Prostate gland (tissue), 2 donors: ENCODE measurements at regions of chr3 and their contacts with region 1.

Region 1: GRCh38 chr3:154766765-154767503 is 313.2 kb upstream of the MME start:
- DNase-seq: no peak
- H3K4me3 ChIP-seq: no peak overlapping the region
- H3K27ac ChIP-seq: no peak overlapping the region
- H3K4me1 ChIP-seq: no peaks in the 10 kb centered on the region
- H3K27me3 ChIP-seq: no peaks in the 10 kb centered on the region
- CTCF ChIP-seq: no peak
- POLR2A ChIP-seq: no peak

Region 2: DNA sequence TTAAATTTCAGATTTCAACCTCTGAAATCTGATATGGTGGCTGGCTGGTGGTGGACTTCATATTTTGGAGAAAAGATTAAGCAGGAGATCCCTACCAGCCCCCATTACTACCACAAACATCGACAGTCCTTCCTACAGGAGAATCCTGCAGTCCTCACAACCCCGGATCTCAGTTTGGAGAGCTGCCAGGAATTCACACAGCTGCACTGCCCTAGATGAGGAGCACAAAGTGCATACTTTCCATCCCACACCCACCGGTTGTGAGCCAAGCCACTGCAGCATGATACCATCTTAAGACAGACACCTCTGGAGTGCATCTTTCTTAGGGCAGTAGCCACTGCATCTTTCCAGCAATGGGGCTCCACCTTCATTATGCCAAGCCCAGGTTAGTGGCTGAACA is 151.5 kb before region 1 on chr3:
- intact Hi-C with region 1: no loop called
- DNase-seq: no peak
- H3K4me3 ChIP-seq: no peak overlapping the region
- H3K27ac ChIP-seq: no peak overlapping the region
- H3K4me1 ChIP-seq: no peaks in the 10 kb centered on the region
- H3K27me3 ChIP-seq: no peaks in the 10 kb centered on the region
- CTCF ChIP-seq: no peak
- POLR2A ChIP-seq: no peak

Region 3: GRCh38 chr3:154898443-154898842 is 131.5 kb after region 1 on chr3:
- intact Hi-C with region 1: no loop called
- DNase-seq: no peak
- H3K4me3 ChIP-seq: no peak overlapping the region
- H3K27ac ChIP-seq: no peak overlapping the region
- H3K4me1 ChIP-seq: no peaks in the 10 kb centered on the region
- H3K27me3 ChIP-seq: no peaks in the 10 kb centered on the region
- CTCF ChIP-seq: no peak
- POLR2A ChIP-seq: no peak

Region 4: GRCh38 chr3:154981201-154981600 is 214.3 kb after region 1 on chr3:
- intact Hi-C with region 1: no loop called
- DNase-seq: no peak
- H3K4me3 ChIP-seq: no peak overlapping the region
- H3K27ac ChIP-seq: no peak overlapping the region
- H3K4me1 ChIP-seq: no peaks in the 10 kb centered on the region
- H3K27me3 ChIP-seq: no peaks in the 10 kb centered on the region
- CTCF ChIP-seq: no peak
- POLR2A ChIP-seq: no peak

Region 5: DNA sequence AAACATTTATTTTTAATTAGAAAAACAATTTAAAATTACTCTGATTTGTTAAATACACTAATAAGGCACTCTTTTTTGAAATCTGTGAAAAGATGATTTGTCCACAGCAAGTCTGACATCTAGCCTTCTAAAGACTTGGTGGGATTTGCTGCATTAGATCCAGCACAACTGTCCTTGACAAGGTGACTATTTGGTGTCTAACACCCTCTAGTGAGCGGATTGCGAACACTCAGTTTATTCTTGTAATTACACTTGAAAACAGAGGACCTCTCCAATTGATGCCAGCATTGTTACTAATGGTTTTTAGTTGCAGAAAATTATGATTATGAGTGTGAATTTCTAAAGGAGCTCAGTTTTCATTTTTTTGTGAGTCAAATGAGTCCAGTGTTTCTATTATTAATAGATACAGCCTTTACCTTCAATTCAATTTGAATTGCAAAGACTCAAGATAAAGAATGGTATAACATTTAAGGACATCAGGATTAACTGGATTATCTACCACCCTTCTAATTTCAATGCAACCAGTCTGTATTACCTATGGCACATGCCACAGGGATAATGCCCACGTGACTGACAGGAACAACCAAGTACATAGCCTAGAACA is 556.2 kb after region 1 on chr3:
- intact Hi-C with region 1: loop called (anchors 5 kb)
- DNase-seq: peak; percentile 47
- H3K4me3 ChIP-seq: no peak overlapping the region
- H3K27ac ChIP-seq: no peak overlapping the region
- H3K4me1 ChIP-seq: no peaks in the 10 kb centered on the region
- H3K27me3 ChIP-seq: no peaks in the 10 kb centered on the region
- CTCF ChIP-seq: peak; percentile 36 to 78 (median 67)
- POLR2A ChIP-seq: no peak